Ovary (tissue), 10 donors: ENCODE measurements at regions of chr3 and their contacts with region 1.

Region 1: GRCh38 chr3:183233966-183234365 is 19.1 kb upstream of the B3GNT5 start:
- DNase-seq: no peak
- H3K4me3 ChIP-seq: no peak overlapping the region
- H3K27ac ChIP-seq: no peak overlapping the region
- H3K4me1 ChIP-seq: no peaks in the 10 kb centered on the region
- H3K27me3 ChIP-seq: no peaks in the 10 kb centered on the region
- CTCF ChIP-seq: no peak
- EP300 ChIP-seq: no peak
- POLR2A ChIP-seq: no peak

Region 2: GRCh38 chr3:183298701-183299153 is 64.8 kb after region 1 on chr3:
- intact Hi-C with region 1: loop called in 1 of 4 experiments (anchors 10 kb)
- DNase-seq: peak in 2 of 5 donors; percentile 12 to 25
- H3K4me3 ChIP-seq: no peak overlapping the region
- H3K27ac ChIP-seq: no peak overlapping the region
- H3K4me1 ChIP-seq: no peaks in the 10 kb centered on the region
- H3K27me3 ChIP-seq: no peaks in the 10 kb centered on the region
- CTCF ChIP-seq: no peak
- EP300 ChIP-seq: no peak
- POLR2A ChIP-seq: no peak